Activated naive CD4-positive, alpha-beta T cell treated with anti-CD3 and anti-CD28 coated beads for 36 hours (primary cell): ENCODE measurements at regions of chr4 and their contacts with region 1.

Region 1: GRCh38 chr4:185005216-185005819 is 13.0 kb upstream of the HELT start:
- DNase-seq: peak; percentile 92
- H3K4me3 Mint-ChIP-seq: peak overlapping the region; percentile 17
- H3K27ac Mint-ChIP-seq: no peak overlapping the region
- H3K4me1 Mint-ChIP-seq: peaks cover 6% of the 10 kb centered on the region
- H3K27me3 Mint-ChIP-seq: peaks cover 28% of the 10 kb centered on the region

Region 2: GRCh38 chr4:183977707-183978106 is 1027.6 kb before region 1 on chr4:
- CTCF ChIA-PET with region 1: no interaction called
- intact Hi-C with region 1: no loop called
- DNase-seq: no peak
- H3K4me3 Mint-ChIP-seq: no peak overlapping the region
- H3K27ac Mint-ChIP-seq: no peak overlapping the region
- H3K4me1 Mint-ChIP-seq: no peaks in the 10 kb centered on the region
- H3K27me3 Mint-ChIP-seq: no peaks in the 10 kb centered on the region

Region 3: GRCh38 chr4:185096032-185096653 is 90.8 kb after region 1 on chr4:
- CTCF ChIA-PET with region 1: interaction called, 15 read pairs
- intact Hi-C with region 1: loop called (anchors 1 kb)
- DNase-seq: peak; percentile 57
- H3K4me3 Mint-ChIP-seq: no peak overlapping the region
- H3K27ac Mint-ChIP-seq: no peak overlapping the region
- H3K4me1 Mint-ChIP-seq: no peaks in the 10 kb centered on the region
- H3K27me3 Mint-ChIP-seq: peaks cover 8% of the 10 kb centered on the region

Region 4: GRCh38 chr4:185224597-185224996 is 219.3 kb after region 1 on chr4:
- CTCF ChIA-PET with region 1: no interaction called
- intact Hi-C with region 1: no loop called
- DNase-seq: no peak
- H3K4me3 Mint-ChIP-seq: no peak overlapping the region
- H3K27ac Mint-ChIP-seq: no peak overlapping the region
- H3K4me1 Mint-ChIP-seq: peaks cover 3% of the 10 kb centered on the region
- H3K27me3 Mint-ChIP-seq: no peaks in the 10 kb centered on the region